ENCODE measurements at regions of chr11 and their contacts with region 1.

Region 1: GRCh38 chr11:59106363-59107336 is at the start of gene FAM111B:
- DNase-seq: peak; percentile 86
- H3K4me3 Mint-ChIP-seq: peak within 1 kb of the TSS; percentile 84
- H3K27ac Mint-ChIP-seq: peak within 1 kb of the TSS; percentile 72
- H3K4me1 Mint-ChIP-seq: peaks cover 42% of the 10 kb centered on the region
- H3K27me3 Mint-ChIP-seq: peaks cover 3% of the 10 kb centered on the region
- total RNA-seq, gene FAM111B: 28.9 to 31.0 TPM

Region 2: DNA sequence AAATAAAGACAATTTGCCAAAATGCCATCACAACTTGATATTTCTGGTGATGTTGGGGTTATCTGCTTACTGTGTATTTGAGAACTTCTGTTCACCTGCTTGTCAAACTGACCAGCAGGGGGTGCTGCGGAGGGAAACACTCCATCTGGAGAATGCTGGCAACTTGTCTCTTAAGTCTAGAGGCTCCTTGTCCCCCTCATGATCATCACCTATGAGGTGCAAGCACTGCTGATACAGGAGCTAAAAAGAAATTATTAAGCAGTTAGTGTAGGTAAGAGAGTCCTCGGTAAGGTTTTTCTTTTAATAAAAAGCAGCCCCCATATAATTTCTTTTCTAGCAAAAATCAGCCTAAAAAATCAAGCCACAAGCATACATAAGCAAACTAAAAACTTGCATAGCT is 53.3 kb before region 1 on chr11:
- CTCF ChIA-PET with region 1: interaction called, 15 read pairs
- POLR2A ChIA-PET with region 1: interaction called, 3 read pairs
- intact Hi-C with region 1: loop called (anchors 5 kb)
- DNase-seq: peak; percentile 86
- H3K4me3 Mint-ChIP-seq: no peak overlapping the region
- H3K27ac Mint-ChIP-seq: no peak overlapping the region
- H3K4me1 Mint-ChIP-seq: peaks cover 4% of the 10 kb centered on the region
- H3K27me3 Mint-ChIP-seq: peaks cover 17% of the 10 kb centered on the region

Region 3: GRCh38 chr11:59076876-59077571 is 29.6 kb before region 1 on chr11:
- CTCF ChIA-PET with region 1: no interaction called
- POLR2A ChIA-PET with region 1: no interaction called
- intact Hi-C with region 1: loop called (anchors 2 kb)
- DNase-seq: no peak
- H3K4me3 Mint-ChIP-seq: no peak overlapping the region
- H3K27ac Mint-ChIP-seq: no peak overlapping the region
- H3K4me1 Mint-ChIP-seq: no peaks in the 10 kb centered on the region
- H3K27me3 Mint-ChIP-seq: peaks cover 25% of the 10 kb centered on the region

Region 4: GRCh38 chr11:59142530-59143507 is 36.2 kb after region 1 on chr11 and contains the start of gene FAM111A:
- CTCF ChIA-PET with region 1: interaction called, 10 read pairs
- POLR2A ChIA-PET with region 1: interaction called, 22 read pairs
- intact Hi-C with region 1: loop called (anchors 1 kb)
- DNase-seq: peak; percentile 90
- H3K4me3 Mint-ChIP-seq: peak within 1 kb of the TSS; percentile 94
- H3K27ac Mint-ChIP-seq: peak within 1 kb of the TSS; percentile 93
- H3K4me1 Mint-ChIP-seq: peaks cover 50% of the 10 kb centered on the region
- H3K27me3 Mint-ChIP-seq: no peaks in the 10 kb centered on the region
- total RNA-seq, gene FAM111A: 87.6 to 87.8 TPM

Region 5: DNA sequence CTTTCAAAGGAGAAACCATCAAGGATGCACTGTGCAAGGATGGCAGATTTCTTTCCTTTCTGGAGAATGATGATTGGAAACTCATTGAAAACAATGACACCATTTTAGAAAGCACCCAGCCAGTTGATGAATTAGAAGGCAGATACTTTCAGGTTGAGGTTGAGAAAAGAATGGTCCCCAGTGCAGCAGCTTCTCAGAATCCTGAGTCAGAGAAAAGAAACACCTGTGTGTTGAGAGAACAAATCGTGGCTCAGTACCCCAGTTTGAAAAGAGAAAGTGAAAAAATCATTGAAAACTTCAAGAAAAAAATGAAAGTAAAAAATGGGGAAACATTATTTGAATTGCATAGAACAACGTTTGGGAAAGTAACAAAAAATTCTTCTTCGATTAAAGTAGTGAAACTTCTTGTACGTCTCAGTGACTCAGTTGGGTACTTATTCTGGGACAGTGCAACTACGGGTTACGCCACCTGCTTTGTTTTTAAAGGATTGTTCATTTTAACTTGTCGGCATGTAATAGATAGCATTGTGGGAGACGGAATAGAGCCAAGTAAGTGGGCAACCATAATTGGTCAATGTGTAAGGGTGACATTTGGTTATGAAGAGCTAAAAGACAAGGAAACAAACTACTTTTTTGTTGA is 45.8 kb after region 1 on chr11:
- CTCF ChIA-PET with region 1: interaction called, 11 read pairs
- POLR2A ChIA-PET with region 1: interaction called, 9 read pairs
- intact Hi-C with region 1: loop called (anchors 2 kb)
- DNase-seq: peak; percentile 55
- H3K4me3 Mint-ChIP-seq: peak overlapping the region; percentile 53
- H3K27ac Mint-ChIP-seq: peak overlapping the region; percentile 92
- H3K4me1 Mint-ChIP-seq: peaks cover 41% of the 10 kb centered on the region
- H3K27me3 Mint-ChIP-seq: no peaks in the 10 kb centered on the region

Region 6: GRCh38 chr11:59335001-59335400 is 228.4 kb after region 1 on chr11:
- CTCF ChIA-PET with region 1: no interaction called
- POLR2A ChIA-PET with region 1: no interaction called
- intact Hi-C with region 1: no loop called
- DNase-seq: no peak
- H3K4me3 Mint-ChIP-seq: no peak overlapping the region
- H3K27ac Mint-ChIP-seq: no peak overlapping the region
- H3K4me1 Mint-ChIP-seq: no peaks in the 10 kb centered on the region
- H3K27me3 Mint-ChIP-seq: peaks cover 11% of the 10 kb centered on the region

Measured in activated CD4-positive, alpha-beta memory T cell treated with anti-CD3 and anti-CD28 coated beads for 36 hours (primary cell).